Sigmoid colon (tissue), 7 donors: ENCODE measurements at regions of chr1 and their contacts with region 1.

Region 1: DNA sequence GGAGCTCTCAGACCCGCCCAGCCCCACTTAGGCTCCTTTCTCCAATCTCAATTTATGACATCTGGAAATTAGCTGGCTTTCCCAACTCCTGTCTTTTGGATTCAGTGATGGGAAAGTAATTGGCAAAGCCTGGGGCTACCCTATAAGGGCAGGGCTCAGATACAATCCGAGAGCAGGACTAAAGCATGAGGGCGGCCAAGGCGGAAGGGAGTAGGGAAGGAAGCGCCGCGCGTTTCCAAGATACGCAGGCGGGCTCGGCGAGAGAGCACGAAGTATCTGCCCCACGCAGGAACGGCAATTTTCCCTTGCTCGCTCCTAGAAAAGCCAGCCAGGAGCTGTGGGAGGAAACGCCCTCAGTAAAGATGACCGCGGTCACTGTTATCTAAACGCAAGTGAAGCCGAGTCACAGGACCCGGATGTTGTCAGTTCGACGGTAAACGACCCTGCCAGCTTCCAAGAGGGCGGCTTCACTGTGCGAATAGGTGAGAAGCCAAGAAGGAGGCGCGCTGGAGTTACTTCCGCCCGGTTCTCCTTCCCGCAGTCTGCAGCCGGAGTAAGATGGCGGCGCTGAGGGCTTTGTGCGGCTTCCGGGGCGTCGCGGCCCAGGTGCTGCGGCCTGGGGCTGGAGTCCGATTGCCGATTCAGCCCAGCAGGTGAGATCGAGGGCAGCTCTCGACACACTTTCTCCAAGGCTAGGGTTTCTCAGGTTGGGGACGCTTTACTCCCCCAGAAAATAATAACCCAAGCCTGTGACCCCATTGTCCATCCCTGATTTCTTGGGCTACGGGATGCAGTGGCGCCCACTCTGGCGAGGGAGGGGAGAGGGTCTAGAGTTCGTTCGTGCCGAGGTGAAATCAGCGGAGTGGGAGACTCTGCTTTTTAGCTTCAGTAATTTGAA is at the start of gene NDUFS2:
- DNase-seq: peak; percentile 100
- H3K4me3 ChIP-seq: peak within 1 kb of the TSS; percentile 75 to 83 (median 78)
- H3K27ac ChIP-seq: peak within 1 kb of the TSS; percentile 94 to 97 (median 96)
- H3K4me1 ChIP-seq: peaks cover 0 to 83% (median 74%) of the 10 kb centered on the region in 4 donors
- H3K27me3 ChIP-seq: no peaks in the 10 kb centered on the region
- CTCF ChIP-seq: no peak
- EP300 ChIP-seq: peak in 1 of 4 donors; percentile 4
- POLR2A ChIP-seq: peak; percentile 60 to 81
- total RNA-seq, gene NDUFS2: 79.6 to 113 (median 92.6) TPM

Region 2: DNA sequence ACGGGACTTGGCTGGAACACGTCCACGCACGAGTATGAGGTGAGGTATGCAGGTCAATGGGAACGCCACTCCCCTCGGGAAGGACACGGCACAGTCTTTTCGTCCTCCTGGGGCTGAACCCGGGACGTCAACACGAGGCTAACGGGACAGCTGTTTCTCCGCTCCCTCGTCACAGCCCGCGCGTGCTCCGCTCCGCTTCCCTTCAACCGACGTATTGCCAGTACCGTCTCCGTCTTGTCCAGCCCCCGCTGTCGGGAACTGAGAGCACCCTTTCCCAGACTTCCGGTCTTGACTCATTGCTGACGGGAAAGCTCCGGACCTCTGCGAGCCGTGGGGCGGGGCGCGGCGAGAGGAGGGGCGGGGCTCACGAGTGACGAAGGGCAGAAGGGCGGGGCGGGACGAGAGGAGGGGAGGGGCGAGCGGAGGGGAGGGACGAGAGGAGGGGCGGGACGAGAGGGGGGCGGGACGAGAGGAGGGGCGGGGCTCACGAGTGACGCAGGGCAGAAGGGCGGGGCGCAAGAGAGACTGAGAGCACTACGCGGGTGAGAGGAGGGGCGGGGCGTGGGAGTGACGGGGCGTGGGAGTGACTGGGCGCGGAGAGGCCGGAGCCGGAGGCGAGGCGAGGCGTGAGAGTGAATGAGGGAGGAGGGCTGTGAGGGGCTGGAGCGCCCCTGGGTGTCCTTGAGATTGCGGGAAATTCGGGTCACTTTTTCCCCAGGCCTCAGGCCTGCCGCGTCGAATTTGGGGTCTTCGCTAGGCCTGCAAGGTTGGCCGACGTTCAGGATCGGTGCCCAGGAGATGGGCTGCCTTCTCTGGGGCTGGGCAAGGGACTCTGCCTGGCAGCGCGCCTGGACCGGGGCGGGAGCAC is 187.8 kb after region 1 on chr1:
- intact Hi-C with region 1: loop called (anchors 2 kb)
- DNase-seq: peak; percentile 99
- H3K4me3 ChIP-seq: peak overlapping the region; percentile 43 to 68 (median 60)
- H3K27ac ChIP-seq: peak overlapping the region; percentile 90 to 94 (median 93)
- H3K4me1 ChIP-seq: peaks cover 0 to 13% (median 8%) of the 10 kb centered on the region in 4 donors
- H3K27me3 ChIP-seq: no peaks in the 10 kb centered on the region
- CTCF ChIP-seq: no peak
- EP300 ChIP-seq: peak; percentile 95 to 100 (median 98)
- POLR2A ChIP-seq: peak; percentile 85 to 91